T-cell (primary cell): ENCODE measurements at regions of chr2 and their contacts with region 1.

Region 1: DNA sequence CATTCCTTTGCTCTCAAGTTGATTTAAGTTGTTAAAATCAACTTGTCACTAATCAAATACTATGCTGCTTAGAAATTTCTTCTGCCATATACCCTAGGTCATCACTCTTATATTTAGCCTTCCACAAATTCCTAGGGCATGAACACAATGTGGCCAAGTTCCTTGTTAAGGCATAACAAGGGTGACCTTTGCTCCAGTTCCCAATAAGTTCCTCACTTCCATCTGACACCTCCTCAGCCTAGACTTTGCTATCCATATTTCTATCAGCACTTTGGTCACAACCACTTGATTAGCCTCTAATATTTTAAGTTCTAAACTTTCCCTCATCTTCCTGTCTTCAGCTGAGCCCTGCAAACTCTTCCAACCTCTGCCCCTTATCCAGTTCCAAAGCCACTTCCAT is 9.9 kb upstream of the TMEM37 start:
- DNase-seq: no peak
- ATAC-seq: no peak
- H3K4me3 ChIP-seq: no peak overlapping the region
- H3K4me3 Mint-ChIP-seq: no peak overlapping the region
- H3K27ac ChIP-seq: no peak overlapping the region
- H3K27ac Mint-ChIP-seq: no peak overlapping the region
- H3K4me1 ChIP-seq: no peaks in the 10 kb centered on the region
- H3K4me1 Mint-ChIP-seq: no peaks in the 10 kb centered on the region
- H3K27me3 ChIP-seq: peaks cover 0 to 30% of the 10 kb centered on the region in 2 experiments
- H3K27me3 Mint-ChIP-seq: peaks cover 43 to 46% of the 10 kb centered on the region in 2 donors

Region 2: DNA sequence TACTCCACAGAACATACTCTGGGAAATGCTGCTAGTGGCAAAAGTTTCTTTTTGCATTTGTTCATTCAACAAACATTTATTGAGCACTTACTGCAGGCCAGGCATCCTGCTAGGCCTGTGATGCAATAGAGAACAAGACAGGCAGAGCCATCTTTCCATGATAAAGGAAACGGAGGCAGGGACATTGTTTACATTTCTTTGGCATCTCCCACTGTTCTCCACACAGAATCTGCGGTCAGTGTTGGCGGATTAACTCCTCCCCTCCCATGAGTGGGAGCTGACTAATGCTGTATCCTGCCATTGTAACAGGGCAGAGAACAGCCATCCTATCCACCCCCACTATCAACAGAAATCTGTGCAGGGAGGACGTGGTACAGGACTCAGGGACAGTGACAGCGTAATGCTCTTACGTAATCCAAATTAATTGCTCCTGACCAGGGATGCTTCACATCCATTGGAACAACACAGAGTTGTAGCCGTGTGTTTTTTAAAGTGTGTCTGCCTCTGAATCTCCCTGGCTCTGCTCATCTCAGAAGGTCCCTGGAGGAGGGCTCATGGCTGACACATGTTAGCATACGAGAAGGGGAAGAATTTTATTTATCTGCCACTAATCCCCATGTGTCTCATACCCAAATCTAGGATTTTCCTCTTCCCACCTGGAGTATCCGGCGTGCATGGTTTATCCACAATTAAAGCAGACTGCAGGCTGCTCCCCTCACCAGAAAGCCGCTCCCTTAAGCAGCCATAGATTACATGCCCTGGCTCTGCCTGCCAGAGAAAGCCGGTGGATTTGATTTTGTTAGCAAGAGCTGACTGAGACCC is 165.8 kb before region 1 on chr2:
- CTCF ChIA-PET with region 1: no interaction called
- POLR2A ChIA-PET with region 1: no interaction called
- DNase-seq: no peak
- ATAC-seq: no peak
- H3K4me3 ChIP-seq: no peak overlapping the region
- H3K4me3 Mint-ChIP-seq: no peak overlapping the region
- H3K27ac ChIP-seq: no peak overlapping the region
- H3K27ac Mint-ChIP-seq: no peak overlapping the region
- H3K4me1 ChIP-seq: no peaks in the 10 kb centered on the region
- H3K4me1 Mint-ChIP-seq: no peaks in the 10 kb centered on the region
- H3K27me3 ChIP-seq: peaks cover 0 to 7% of the 10 kb centered on the region in 2 experiments
- H3K27me3 Mint-ChIP-seq: no peaks in the 10 kb centered on the region

Region 3: DNA sequence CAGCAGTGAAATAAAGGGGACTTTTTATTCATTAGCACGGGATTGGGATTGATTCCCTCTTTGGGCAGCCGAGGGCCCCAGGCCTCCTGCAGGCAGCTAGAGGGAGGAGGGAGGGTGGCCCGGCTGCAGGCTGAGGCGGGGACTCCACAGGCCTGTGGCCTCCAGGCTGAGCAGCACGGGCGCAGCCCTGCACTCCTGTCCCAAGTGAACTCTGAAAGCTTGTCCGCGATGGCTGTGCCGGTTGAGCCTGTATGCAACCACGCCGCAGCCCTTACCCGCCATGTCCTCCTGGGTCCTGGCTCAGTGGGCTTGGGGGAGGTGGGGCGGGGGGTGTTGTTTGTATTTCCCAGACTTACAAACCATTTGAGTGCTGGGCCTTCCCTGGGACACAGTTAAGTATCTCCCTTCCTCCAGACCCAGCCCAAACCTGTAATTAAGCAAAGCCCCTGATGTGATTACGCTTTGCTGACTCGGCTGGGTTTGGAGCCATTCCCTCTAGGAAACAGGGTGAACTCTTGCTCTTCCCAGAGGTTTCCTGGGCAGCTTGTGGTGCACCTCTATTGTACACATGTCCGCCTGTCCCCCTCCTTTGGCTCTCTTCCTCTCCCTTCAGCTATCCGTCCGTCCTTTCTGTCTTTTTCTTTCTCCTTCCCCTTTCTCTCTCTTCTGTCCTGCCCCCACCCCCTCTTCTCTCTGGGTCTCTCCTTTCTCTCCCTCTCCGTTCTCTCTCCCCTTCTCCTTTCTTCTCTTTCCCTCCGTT is 1319.2 kb after region 1 on chr2:
- CTCF ChIA-PET with region 1: no interaction called
- POLR2A ChIA-PET with region 1: interaction called in 1 of 2 experiments, 12 read pairs
- DNase-seq: no peak
- ATAC-seq: no peak
- H3K4me3 ChIP-seq: no peak overlapping the region
- H3K4me3 Mint-ChIP-seq: no peak overlapping the region
- H3K27ac ChIP-seq: no peak overlapping the region
- H3K27ac Mint-ChIP-seq: no peak overlapping the region
- H3K4me1 ChIP-seq: peaks cover 0 to 12% of the 10 kb centered on the region in 2 experiments
- H3K4me1 Mint-ChIP-seq: peaks cover 6 to 12% (median 10%) of the 10 kb centered on the region in 3 donors
- H3K27me3 ChIP-seq: peaks cover 28 to 58% of the 10 kb centered on the region in 2 experiments
- H3K27me3 Mint-ChIP-seq: peaks cover 62 to 72% of the 10 kb centered on the region in 2 donors